Mammary epithelial cell (primary cell): ENCODE measurements at regions of chr18 and their contacts with region 1.

Region 1: GRCh38 chr18:74116633-74117554 is 30.7 kb downstream of the FBXO15 start:
- DNase-seq: peak; percentile 11
- H3K4me3 ChIP-seq: peak overlapping the region in 1 of 3 experiments; percentile 7
- H3K27ac ChIP-seq: no peak overlapping the region
- H3K4me1 ChIP-seq: peaks cover 5% of the 10 kb centered on the region
- H3K27me3 ChIP-seq: peaks cover 2% of the 10 kb centered on the region
- CTCF ChIP-seq: peak; percentile 71 to 78

Region 2: DNA sequence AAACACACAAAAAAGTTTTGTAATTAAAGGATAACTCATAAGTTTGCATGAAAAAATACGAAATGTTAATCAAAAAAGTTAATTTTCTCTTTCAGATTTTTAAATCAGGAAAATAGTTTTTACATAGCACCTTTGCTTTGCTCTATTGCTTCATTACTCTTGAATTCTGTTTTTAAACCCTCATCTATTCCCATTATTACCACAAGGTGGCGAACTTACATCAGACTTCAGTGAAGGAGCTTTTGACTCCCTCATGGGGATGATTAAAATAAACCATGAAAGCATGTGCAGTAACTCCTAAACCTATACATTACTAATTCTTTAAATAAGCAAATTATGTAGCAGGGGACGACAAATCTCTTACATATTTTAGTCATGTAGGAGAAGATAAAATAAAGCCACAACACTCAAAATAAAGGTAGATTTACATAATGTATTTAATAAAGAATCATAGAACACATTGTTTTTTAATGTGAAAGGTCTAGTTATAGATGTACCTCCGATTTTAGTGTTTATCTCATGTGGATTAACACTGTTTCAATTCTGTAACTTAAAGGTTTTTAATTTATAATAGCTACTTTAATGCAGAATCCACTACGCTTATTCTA is 1354.3 kb before region 1 on chr18:
- CTCF ChIA-PET with region 1: no interaction called
- dilution Hi-C with region 1: no loop called
- in situ Hi-C with region 1: no loop called
- intact Hi-C with region 1: loop called (anchors 1 kb)
- DNase-seq: peak; percentile 61
- H3K4me3 ChIP-seq: no peak overlapping the region
- H3K27ac ChIP-seq: no peak overlapping the region
- H3K4me1 ChIP-seq: no peaks in the 10 kb centered on the region
- H3K27me3 ChIP-seq: no peaks in the 10 kb centered on the region
- CTCF ChIP-seq: peak; percentile 52 to 67

Region 3: DNA sequence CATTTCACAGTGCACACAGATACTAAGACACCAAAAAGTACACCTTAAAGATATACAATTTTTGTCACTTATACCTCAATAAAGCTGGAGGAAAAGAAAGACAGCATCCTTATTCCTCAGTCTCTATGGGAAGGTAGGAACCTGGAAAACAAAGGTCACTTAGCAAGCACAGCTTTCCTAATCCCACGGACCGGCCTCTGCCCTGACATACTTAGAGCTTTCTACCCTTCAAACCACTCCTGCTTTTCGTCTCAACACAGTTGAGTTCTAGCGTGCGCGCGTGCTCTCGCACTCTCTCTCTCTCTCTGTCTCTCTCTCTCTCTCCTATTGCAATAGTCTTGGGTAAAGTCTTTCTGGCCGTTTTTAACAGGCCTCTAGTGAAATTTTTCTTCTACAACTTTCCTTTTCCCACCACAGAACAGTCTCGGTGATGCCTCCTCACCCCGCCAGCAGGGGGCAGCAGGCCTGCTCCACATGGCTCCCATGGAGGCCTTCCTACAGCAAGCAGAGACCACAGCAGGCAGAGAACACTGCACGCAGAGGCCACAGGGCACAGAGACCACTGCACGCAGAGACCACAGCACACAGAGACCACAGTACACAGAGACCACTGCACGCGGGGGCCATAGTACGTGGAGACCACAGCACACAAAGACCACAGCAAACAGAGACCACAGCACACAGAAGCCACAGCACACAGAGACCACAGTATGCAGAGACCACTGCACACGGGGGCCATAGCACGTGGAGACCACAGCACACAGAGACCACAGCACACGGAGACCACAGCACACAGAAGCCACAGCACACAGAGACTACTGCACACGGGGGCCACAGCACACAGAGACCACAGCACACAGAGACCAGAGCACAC is 76.2 kb before region 1 on chr18:
- CTCF ChIA-PET with region 1: no interaction called
- dilution Hi-C with region 1: no loop called
- in situ Hi-C with region 1: no loop called
- intact Hi-C with region 1: loop called (anchors 1 kb)
- DNase-seq: no peak
- H3K4me3 ChIP-seq: no peak overlapping the region
- H3K27ac ChIP-seq: no peak overlapping the region
- H3K4me1 ChIP-seq: no peaks in the 10 kb centered on the region
- H3K27me3 ChIP-seq: peaks cover 2% of the 10 kb centered on the region
- CTCF ChIP-seq: peak; percentile 75 to 82

Region 4: DNA sequence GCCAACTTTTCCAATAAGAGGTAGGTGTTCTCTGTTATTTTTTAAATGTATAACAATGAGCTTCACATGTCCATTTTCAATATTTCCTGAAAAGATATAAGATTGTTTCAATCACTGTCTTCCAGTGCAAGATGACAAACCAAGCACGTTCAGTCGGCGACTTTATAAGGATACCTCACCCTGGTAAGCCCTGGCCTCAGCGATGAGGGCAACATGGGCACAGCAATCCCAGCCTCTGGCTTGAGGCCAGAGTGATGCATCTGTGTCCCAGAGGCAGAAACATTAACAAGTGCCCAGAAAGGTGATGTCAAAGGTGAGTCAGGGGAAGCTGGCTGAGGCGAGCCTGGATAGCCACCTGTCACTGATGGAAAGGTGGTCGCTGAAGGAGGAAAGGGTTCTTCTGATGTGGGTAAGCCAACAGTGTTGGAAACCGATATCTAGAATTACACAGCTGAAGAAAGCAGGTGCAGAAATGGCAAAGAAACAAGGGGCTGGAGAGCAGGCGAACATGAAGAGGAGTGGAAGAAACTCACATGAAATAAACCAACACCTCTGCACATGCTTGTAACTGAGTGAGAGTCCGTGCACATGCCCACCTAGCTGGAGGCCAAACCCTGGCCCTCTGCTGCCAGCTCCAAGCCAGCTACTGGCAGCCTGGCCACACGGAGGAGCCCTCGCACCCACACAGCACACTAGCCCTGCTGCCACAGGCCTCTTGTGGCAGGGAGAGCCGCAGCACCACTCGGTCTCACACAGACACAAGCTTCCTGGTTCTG is 34.7 kb before region 1 on chr18:
- CTCF ChIA-PET with region 1: no interaction called
- dilution Hi-C with region 1: no loop called
- in situ Hi-C with region 1: no loop called
- intact Hi-C with region 1: loop called (anchors 2 kb)
- DNase-seq: peak; percentile 49
- H3K4me3 ChIP-seq: no peak overlapping the region
- H3K27ac ChIP-seq: no peak overlapping the region
- H3K4me1 ChIP-seq: no peaks in the 10 kb centered on the region
- H3K27me3 ChIP-seq: no peaks in the 10 kb centered on the region
- CTCF ChIP-seq: peak; percentile 59 to 82

Region 5: GRCh38 chr18:74378179-74378682 is 261.3 kb after region 1 on chr18:
- CTCF ChIA-PET with region 1: no interaction called
- dilution Hi-C with region 1: no loop called
- in situ Hi-C with region 1: no loop called
- intact Hi-C with region 1: no loop called
- DNase-seq: no peak
- H3K4me3 ChIP-seq: no peak overlapping the region
- H3K27ac ChIP-seq: no peak overlapping the region
- H3K4me1 ChIP-seq: no peaks in the 10 kb centered on the region
- H3K27me3 ChIP-seq: no peaks in the 10 kb centered on the region
- CTCF ChIP-seq: no peak